GM12878 (cell line): ENCODE measurements at regions of chr2 and their contacts with region 1.

Region 1: GRCh38 chr2:218852911-218853667 is 6.5 kb upstream of the WNT6 start:
- DNase-seq: no peak
- ATAC-seq: peak; percentile 84
- H3K4me3 ChIP-seq: no peak overlapping the region
- H3K27ac ChIP-seq: no peak overlapping the region
- H3K4me1 ChIP-seq: no peaks in the 10 kb centered on the region
- H3K27me3 ChIP-seq: peaks cover 7 to 18% of the 10 kb centered on the region in 2 experiments
- CTCF ChIP-seq: peak; percentile 75 to 88 (median 77)
- EP300 ChIP-seq: no peak
- POLR2A ChIP-seq: no peak
- RAD21 ChIP-seq: peak; percentile 91

Region 2: GRCh38 chr2:218406209-218406948 is 446.7 kb before region 1 on chr2:
- CTCF ChIA-PET with region 1: no interaction called
- POLR2A ChIA-PET with region 1: no interaction called
- RAD21 ChIA-PET with region 1: no interaction called
- SMC1A ChIA-PET with region 1: no interaction called
- in situ Hi-C with region 1: loop called (anchors 10 kb)
- intact Hi-C with region 1: no loop called
- DNase-seq: peak; percentile 64
- ATAC-seq: peak; percentile 93
- H3K4me3 ChIP-seq: peak overlapping the region; percentile 73
- H3K27ac ChIP-seq: peak overlapping the region; percentile 33
- H3K4me1 ChIP-seq: peaks cover 31% of the 10 kb centered on the region
- H3K27me3 ChIP-seq: no peaks in the 10 kb centered on the region
- CTCF ChIP-seq: peak; percentile 70 to 91 (median 84)
- EP300 ChIP-seq: no peak
- POLR2A ChIP-seq: peak; percentile 51
- RAD21 ChIP-seq: peak; percentile 87

Region 3: DNA sequence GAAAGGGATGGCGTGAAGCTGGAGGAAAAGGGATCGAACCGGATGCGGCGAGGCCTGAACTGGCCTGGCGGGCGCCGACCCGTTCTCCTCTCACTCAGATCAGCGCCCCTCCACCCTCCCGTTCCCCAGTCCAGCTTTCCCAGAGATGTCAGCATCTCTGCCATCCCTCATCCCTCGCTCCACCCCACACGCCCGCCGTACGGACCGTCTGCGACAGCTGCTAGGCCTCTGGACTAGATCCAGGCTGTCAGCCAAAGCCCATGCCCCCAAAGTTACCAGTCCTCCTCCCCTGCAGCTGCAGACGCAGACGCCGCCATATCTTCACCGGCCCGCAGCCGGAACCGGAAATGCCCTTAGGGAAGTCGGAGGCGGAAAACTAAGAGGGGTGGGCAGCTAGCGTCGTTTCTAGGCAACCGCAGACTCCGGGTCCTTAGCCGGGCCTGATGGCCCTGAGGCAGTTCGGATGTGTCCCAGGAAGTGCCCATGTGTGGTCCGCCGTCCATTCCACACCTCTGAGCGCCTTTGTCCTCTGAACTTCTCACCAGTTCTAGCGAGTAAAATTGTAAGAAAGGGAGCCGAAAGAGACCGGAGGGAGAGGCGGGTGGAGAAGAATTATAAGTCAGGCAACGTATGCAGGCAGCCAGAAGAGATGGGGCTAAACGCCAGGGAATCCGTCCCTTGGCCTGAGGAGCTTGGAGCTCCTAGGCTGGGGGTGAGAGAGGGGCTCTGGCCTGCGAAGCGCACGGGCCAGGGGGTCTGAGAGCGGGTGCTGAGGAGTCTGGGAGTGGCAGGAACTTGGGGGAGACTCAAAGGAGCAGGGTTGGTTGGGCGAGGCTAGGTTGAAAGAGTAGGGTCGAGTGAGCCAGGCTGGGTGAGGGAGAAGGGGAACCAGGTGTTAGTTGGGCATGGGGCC is 181.2 kb before region 1 on chr2 and contains the starts of genes RNF25 and STK36:
- CTCF ChIA-PET with region 1: interaction called, 19 read pairs
- POLR2A ChIA-PET with region 1: no interaction called
- RAD21 ChIA-PET with region 1: interaction called, 3 read pairs
- SMC1A ChIA-PET with region 1: no interaction called
- in situ Hi-C with region 1: no loop called
- intact Hi-C with region 1: no loop called
- DNase-seq: peak; percentile 42
- ATAC-seq: peak; percentile 99
- H3K4me3 ChIP-seq: peak within 1 kb of the TSS; percentile 98
- H3K27ac ChIP-seq: peak within 1 kb of the TSS; percentile 82
- H3K4me1 ChIP-seq: 0 out of 2 replicates have a peak, but pooled peaks cover 6% of the 10 kb centered on the region
- H3K27me3 ChIP-seq: no peaks in the 10 kb centered on the region
- CTCF ChIP-seq: no peak
- EP300 ChIP-seq: no peak
- POLR2A ChIP-seq: peak; percentile 88
- RAD21 ChIP-seq: no peak
- polyA plus RNA-seq, gene RNF25: 1.3 to 6.9 TPM
- polyA plus RNA-seq, gene STK36: 4.0 to 7.3 TPM

Region 4: GRCh38 chr2:218710687-218711549 is 142.2 kb before region 1 on chr2 and contains the start of gene TTLL4:
- CTCF ChIA-PET with region 1: interaction called, 17 read pairs
- POLR2A ChIA-PET with region 1: no interaction called
- RAD21 ChIA-PET with region 1: interaction called, 3 read pairs
- SMC1A ChIA-PET with region 1: interaction called, 5 read pairs
- in situ Hi-C with region 1: no loop called
- intact Hi-C with region 1: no loop called
- DNase-seq: peak; percentile 88
- ATAC-seq: peak; percentile 94
- H3K4me3 ChIP-seq: peak within 1 kb of the TSS; percentile 89
- H3K27ac ChIP-seq: peak within 1 kb of the TSS; percentile 77
- H3K4me1 ChIP-seq: peaks cover 7% of the 10 kb centered on the region
- H3K27me3 ChIP-seq: no peaks in the 10 kb centered on the region
- CTCF ChIP-seq: peak; percentile 81 to 95 (median 87)
- EP300 ChIP-seq: no peak
- POLR2A ChIP-seq: peak; percentile 78
- RAD21 ChIP-seq: peak; percentile 81
- polyA plus RNA-seq, gene TTLL4: 16.6 to 18.7 TPM

Region 5: DNA sequence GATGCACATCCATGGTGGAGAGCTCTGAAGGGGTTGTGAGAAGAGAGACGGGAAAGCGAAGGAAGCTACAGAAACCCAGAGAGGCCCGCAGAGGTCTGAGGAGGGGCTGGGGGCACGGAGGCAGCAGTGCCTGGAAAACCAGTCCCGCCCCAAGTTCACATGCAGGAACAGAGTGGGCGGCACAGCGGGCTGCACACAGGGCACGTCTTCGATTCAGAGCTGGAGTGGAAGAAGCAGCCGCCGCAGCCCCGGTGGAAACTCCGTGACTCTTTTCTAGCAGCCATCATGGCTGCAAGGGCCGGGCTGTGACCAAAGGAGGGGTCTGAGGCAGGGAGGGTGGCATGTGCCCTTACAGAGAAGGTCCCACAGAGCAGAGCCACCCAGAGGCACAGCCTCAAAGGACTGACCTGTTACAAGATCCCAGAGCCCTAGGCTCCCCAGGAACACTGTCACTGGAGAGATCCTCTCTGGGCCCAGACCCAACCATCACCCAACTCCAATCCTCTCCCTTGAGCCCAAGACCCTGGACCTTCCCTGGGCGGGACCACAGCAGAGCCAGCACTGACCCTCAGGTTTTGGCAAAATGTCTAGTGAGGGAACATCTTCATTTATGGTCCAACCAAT is 32.2 kb before region 1 on chr2:
- CTCF ChIA-PET with region 1: no interaction called
- POLR2A ChIA-PET with region 1: no interaction called
- RAD21 ChIA-PET with region 1: no interaction called
- SMC1A ChIA-PET with region 1: no interaction called
- in situ Hi-C with region 1: no loop called
- intact Hi-C with region 1: no loop called
- DNase-seq: no peak
- ATAC-seq: no peak
- H3K4me3 ChIP-seq: no peak overlapping the region
- H3K27ac ChIP-seq: no peak overlapping the region
- H3K4me1 ChIP-seq: no peaks in the 10 kb centered on the region
- H3K27me3 ChIP-seq: no peaks in the 10 kb centered on the region; a peak in 1 of 4 replicates
- CTCF ChIP-seq: no peak
- EP300 ChIP-seq: no peak
- POLR2A ChIP-seq: no peak
- RAD21 ChIP-seq: no peak

Region 6: DNA sequence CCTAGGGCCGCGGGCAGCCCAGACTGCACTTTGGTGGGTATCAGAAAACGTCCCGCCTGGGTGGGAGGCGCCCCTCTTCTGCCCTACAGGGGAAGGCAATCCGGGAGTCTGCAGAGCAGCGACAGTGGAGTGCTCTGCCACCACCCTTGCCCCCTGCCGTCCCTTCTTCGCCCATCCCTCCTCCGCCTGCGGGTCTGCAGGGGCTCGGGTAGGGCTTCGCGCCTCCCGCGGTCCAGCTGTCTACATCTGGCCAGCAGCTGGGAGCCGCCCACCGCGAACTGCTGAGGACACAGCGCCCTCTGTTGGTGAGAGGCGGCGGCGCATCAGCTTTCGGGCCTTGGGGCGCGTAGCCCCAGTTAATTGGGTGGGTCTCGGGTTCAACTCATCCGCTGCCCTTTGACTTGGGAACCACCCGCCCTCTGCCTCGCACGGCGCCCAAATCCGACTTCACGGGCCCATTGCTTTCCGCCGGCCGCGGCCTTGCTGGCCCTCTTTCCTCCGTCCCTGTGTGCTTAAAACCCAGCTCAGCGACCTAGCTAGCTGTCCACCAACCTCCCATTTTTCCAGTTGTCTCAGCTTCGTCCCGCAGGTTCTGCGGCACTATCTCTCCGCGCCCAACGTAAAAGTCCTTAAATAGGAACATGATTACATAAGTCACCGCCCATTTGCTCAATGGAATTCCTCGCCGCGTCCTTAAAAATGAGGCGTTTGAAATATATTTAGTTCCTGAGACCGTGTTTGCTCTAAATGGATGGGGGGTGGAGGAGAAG is 45.2 kb after region 1 on chr2:
- CTCF ChIA-PET with region 1: interaction called, 95 read pairs
- POLR2A ChIA-PET with region 1: interaction called, 11 read pairs
- RAD21 ChIA-PET with region 1: interaction called, 40 read pairs
- SMC1A ChIA-PET with region 1: interaction called, 23 read pairs
- in situ Hi-C with region 1: no loop called
- intact Hi-C with region 1: loop called (anchors 1 kb)
- DNase-seq: no peak
- ATAC-seq: peak; percentile 54
- H3K4me3 ChIP-seq: peak overlapping the region; percentile 67; the same call in 1 of the 2 replicates
- H3K27ac ChIP-seq: peak overlapping the region; percentile 95; the same call in 1 of the 2 replicates
- H3K4me1 ChIP-seq: peaks cover 40% of the 10 kb centered on the region
- H3K27me3 ChIP-seq: no peaks in the 10 kb centered on the region
- CTCF ChIP-seq: peak; percentile 93 to 98 (median 98)
- EP300 ChIP-seq: no peak
- POLR2A ChIP-seq: no peak; the same call in 1 of the 2 replicates
- RAD21 ChIP-seq: peak; percentile 94

Region 7: GRCh38 chr2:219002395-219003266 is 149.5 kb after region 1 on chr2:
- CTCF ChIA-PET with region 1: no interaction called
- POLR2A ChIA-PET with region 1: no interaction called
- RAD21 ChIA-PET with region 1: no interaction called
- SMC1A ChIA-PET with region 1: no interaction called
- in situ Hi-C with region 1: no loop called
- intact Hi-C with region 1: loop called (anchors 2 kb)
- DNase-seq: no peak
- ATAC-seq: peak; percentile 61
- H3K4me3 ChIP-seq: no peak overlapping the region
- H3K27ac ChIP-seq: no peak overlapping the region
- H3K4me1 ChIP-seq: no peaks in the 10 kb centered on the region
- H3K27me3 ChIP-seq: peaks cover 9 to 19% of the 10 kb centered on the region in 2 experiments
- CTCF ChIP-seq: peak in 2 of 3 experiments; percentile 15 to 23; a peak in 2 of 6 replicates
- EP300 ChIP-seq: no peak
- POLR2A ChIP-seq: no peak
- RAD21 ChIP-seq: no peak

Region 8: DNA sequence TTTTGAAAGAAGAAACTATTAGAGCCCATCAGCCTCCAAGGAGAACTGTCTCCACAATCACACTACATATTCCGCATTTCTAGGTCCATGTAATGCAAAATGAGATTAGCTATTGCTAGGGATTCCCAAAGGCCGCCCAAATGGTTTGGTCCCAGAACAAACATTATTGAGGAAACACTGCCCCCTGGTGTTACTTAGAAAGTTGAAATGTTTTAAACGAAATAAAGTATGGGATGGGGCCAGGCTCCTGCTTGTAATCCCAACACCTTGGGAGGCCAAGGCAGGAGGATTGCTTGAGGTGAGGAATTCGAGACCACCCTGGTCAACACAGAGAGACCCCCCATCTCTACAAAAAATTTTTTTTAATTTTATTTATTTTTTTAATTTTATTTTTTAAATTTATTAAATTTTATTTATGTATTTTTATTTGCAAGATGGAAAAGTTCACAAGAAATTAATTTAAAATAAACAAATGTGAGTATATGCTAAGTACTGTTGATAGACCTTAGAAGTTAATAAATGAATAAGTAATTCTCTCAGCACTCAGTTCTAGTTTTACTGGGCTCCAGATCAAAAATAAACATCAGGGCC is 302.1 kb after region 1 on chr2:
- CTCF ChIA-PET with region 1: interaction called, 6 read pairs
- POLR2A ChIA-PET with region 1: no interaction called
- RAD21 ChIA-PET with region 1: no interaction called
- SMC1A ChIA-PET with region 1: interaction called, 5 read pairs
- in situ Hi-C with region 1: no loop called
- intact Hi-C with region 1: loop called (anchors 1 kb)
- DNase-seq: no peak
- ATAC-seq: peak; percentile 77
- H3K4me3 ChIP-seq: no peak overlapping the region
- H3K27ac ChIP-seq: no peak overlapping the region
- H3K4me1 ChIP-seq: peaks cover 4% of the 10 kb centered on the region; the same call in 1 of the 2 replicates
- H3K27me3 ChIP-seq: no peaks in the 10 kb centered on the region
- CTCF ChIP-seq: peak; percentile 37 to 66 (median 39); a peak in 5 of 6 replicates
- EP300 ChIP-seq: no peak
- POLR2A ChIP-seq: no peak
- RAD21 ChIP-seq: peak; percentile 78